Activated CD8-positive, alpha-beta T cell treated with anti-CD3 and anti-CD28 coated beads for 36 hours (primary cell): ENCODE measurements at regions of chr9 and their contacts with region 1.

Region 1: DNA sequence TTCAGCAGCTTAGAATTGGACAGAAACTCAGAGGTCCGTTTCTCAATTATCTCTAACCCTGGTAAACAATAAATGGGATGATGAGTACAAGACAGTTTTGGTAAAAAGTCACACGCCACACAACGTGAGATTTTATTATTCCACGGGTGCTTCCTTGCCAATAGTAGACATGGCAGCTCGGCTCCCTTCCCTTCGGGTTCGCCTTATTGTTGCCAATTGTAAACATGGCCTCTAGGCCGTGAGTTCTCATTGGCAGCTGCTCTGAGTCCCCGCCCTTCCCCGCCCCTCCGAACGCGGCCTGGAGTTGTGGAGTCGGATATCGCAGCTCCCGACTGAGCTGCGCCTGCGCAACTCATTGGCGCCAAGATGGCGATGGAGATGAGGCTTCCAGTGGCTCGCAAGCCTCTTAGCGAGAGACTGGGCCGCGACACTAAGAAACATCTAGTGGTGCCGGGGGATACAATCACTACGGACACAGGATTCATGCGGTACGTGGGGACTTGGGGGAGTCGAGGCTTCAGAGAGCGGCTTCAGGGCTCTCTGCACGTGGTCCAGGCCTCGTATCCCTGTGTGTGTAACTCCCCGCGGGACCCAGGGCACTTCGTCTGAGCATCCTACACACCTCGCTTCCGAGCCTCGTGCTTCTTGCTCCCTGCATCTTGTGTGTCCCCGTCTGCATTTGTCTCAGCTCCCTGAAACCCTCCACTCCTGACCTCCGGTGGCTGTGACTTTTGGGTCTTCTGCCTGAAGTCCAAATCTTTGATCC is at the start of gene EXOSC2:
- DNase-seq: peak; percentile 99
- ATAC-seq: peak; percentile 99
- H3K4me3 Mint-ChIP-seq: peak within 1 kb of the TSS; percentile 98
- H3K27ac Mint-ChIP-seq: peak within 1 kb of the TSS; percentile 99
- H3K4me1 Mint-ChIP-seq: peaks cover 39% of the 10 kb centered on the region
- H3K27me3 Mint-ChIP-seq: no peaks in the 10 kb centered on the region
- CTCF ChIP-seq: no peak
- total RNA-seq, gene EXOSC2: 82.1 to 82.5 TPM

Region 2: DNA sequence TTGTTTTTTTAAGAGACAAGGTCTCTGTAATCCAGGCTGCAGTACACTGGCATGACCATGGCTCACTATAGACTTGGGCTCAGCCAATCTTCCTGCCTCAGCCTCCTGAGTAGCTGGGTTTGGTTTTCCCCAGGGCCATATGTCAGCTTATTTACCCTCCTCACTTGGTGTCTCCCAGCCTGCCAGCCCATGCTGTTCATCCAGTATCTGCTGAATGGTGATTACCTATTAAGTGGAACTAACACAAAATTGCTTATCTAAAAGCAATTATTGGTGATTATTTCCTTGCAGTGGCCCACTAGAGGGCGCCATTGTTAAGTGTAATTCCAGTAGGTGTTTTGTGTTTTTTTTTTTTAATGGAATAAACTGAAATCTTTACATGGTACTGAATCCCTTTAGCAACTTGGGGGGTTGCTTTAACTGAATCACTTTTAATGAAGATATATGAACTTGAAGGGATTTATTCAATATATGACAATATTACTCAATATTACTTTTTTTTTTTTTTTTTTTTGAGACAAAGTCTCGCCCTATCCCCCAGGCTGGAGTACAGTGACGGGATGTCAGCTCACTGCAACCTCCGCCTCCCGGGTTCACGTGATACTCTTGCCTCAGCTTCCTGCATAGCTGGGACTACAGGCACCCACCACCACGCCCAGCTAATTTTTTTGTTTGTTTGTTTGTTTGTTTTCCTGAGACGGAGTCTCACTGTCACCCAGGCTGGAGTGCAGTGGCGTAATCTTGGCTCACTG is 13.8 kb after region 1 on chr9:
- CTCF ChIA-PET with region 1: interaction called, 37 read pairs
- POLR2A ChIA-PET with region 1: interaction called, 54 read pairs
- intact Hi-C with region 1: no loop called
- DNase-seq: peak; percentile 84
- ATAC-seq: peak; percentile 60
- H3K4me3 Mint-ChIP-seq: no peak overlapping the region
- H3K27ac Mint-ChIP-seq: peak overlapping the region; percentile 42
- H3K4me1 Mint-ChIP-seq: peaks cover 1% of the 10 kb centered on the region
- H3K27me3 Mint-ChIP-seq: no peaks in the 10 kb centered on the region
- CTCF ChIP-seq: peak; percentile 85